Activated CD8-positive, alpha-beta memory T cell treated with anti-CD3 and anti-CD28 coated beads, Interleukin-2, amount 10 ng/mL, durations not matched to agents 7 days and 5 days (primary cell): ENCODE measurements at regions of chr1 and their contacts with region 1.

Region 1: DNA sequence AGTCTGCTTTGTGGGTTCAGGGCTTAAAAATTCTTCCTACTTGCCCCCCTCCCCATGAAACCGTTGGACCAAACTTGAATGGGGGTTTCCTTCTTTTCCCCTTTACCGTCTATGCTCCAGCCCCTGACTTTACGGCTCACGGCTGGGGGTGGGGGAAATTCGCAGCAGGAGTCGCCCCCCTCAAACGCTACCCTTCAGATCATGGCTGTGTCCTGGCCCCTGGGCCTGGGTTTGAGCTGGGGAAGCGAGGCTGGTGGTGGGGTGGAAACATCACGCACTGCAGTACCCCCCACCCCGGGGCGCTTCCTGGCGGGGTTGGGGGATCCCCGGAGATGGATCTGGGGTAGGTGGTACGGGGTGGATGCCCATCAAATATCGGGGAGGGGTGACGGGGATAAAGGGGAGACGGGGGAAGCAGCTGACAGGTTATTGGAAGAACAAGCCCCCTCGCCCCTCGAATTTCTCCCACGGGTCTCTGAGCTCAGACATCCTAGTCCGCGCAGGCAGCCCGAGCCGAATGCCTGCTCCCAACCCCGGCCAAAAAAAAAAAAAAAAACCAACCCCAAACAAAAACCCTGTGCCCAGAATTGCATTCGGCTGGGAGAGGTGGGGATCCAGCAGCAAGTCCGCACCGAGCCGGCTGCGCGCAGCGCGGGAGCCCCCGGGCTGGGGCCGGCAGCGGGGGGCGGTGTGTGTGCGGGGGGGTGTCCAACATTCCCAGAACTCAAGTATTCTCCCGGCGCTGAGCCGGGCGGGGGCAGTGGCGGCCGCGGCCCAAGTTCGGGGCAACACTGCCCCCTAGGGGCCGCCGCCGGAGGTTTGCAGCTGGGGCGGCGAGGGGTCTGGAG is 59.0 kb upstream of the ACOT11 start:
- DNase-seq: peak; percentile 73
- ATAC-seq: peak; percentile 80
- H3K4me3 Mint-ChIP-seq: peak overlapping the region; percentile 75
- H3K27ac Mint-ChIP-seq: peak overlapping the region; percentile 76
- H3K4me1 Mint-ChIP-seq: peaks cover 33% of the 10 kb centered on the region
- H3K27me3 Mint-ChIP-seq: peaks cover 45% of the 10 kb centered on the region

Region 2: GRCh38 chr1:54070171-54070837 is 418.7 kb before region 1 on chr1:
- CTCF ChIA-PET with region 1: interaction called, 22 read pairs
- DNase-seq: no peak
- ATAC-seq: peak; percentile 75
- H3K4me3 Mint-ChIP-seq: no peak overlapping the region
- H3K27ac Mint-ChIP-seq: no peak overlapping the region
- H3K4me1 Mint-ChIP-seq: no peaks in the 10 kb centered on the region
- H3K27me3 Mint-ChIP-seq: no peaks in the 10 kb centered on the region

Region 3: DNA sequence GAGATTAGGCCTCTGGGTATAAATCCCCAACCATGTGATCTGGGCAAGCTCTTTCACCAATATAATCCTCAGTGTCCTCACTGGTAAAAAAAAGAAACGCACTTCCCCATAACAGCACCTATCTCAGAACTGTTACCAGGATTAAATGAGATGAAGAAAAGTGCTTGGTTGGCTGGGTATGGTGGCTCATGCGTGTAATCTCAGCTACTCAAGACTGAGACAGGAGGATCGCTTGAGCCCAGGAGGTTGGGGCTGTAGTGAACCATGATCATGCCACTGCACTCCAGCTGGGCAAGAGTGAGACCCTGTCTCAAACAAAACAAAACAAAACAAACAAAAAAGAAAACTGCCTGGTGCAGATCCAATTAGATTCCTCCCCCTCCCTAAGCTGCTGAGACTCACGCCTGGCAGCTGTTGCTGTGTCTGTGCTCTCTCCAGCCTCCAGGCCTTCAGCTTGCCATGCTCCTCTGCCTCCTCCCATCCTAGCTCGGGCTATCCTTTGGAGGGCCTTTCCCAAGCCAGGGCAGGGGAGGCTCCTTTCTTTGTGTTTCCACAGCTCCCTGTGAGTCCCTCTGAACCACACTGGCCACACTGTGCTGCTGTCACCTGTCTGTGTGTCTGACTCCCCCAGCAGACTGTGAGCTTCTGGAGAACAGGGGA is 308.2 kb before region 1 on chr1:
- CTCF ChIA-PET with region 1: interaction called, 17 read pairs
- DNase-seq: no peak
- ATAC-seq: no peak
- H3K4me3 Mint-ChIP-seq: no peak overlapping the region
- H3K27ac Mint-ChIP-seq: no peak overlapping the region
- H3K4me1 Mint-ChIP-seq: no peaks in the 10 kb centered on the region
- H3K27me3 Mint-ChIP-seq: no peaks in the 10 kb centered on the region

Region 4: GRCh38 chr1:54284781-54285529 is 204.0 kb before region 1 on chr1:
- CTCF ChIA-PET with region 1: interaction called, 12 read pairs
- DNase-seq: peak; percentile 76
- ATAC-seq: peak; percentile 59
- H3K4me3 Mint-ChIP-seq: peak overlapping the region; percentile 74
- H3K27ac Mint-ChIP-seq: peak overlapping the region; percentile 97
- H3K4me1 Mint-ChIP-seq: peaks cover 90% of the 10 kb centered on the region
- H3K27me3 Mint-ChIP-seq: no peaks in the 10 kb centered on the region

Region 5: DNA sequence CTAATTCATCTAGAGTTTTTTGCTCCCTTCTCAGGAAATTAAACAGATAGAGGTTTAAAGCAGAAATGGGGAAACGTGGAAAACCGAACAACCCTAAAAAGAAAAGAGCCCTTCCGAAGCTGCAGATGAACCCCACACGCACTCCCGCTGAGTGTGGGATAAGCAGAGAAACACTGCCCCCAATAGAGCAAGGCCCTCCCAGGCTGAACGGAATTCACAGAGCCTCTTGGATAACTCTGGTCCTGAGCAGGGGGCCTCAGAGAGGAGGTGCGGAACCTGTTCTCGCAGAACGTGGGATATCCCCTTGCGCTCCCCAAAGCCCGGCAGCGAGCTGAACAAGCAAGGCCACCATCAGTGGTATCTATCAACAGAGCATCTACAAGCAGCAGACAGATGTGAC is 127.7 kb before region 1 on chr1:
- CTCF ChIA-PET with region 1: interaction called, 13 read pairs
- DNase-seq: no peak
- ATAC-seq: no peak
- H3K4me3 Mint-ChIP-seq: no peak overlapping the region
- H3K27ac Mint-ChIP-seq: no peak overlapping the region
- H3K4me1 Mint-ChIP-seq: peaks cover 41% of the 10 kb centered on the region
- H3K27me3 Mint-ChIP-seq: no peaks in the 10 kb centered on the region

Region 6: GRCh38 chr1:54413295-54413694 is 75.7 kb before region 1 on chr1:
- CTCF ChIA-PET with region 1: interaction called, 16 read pairs
- DNase-seq: peak; percentile 64
- ATAC-seq: peak; percentile 37
- H3K4me3 Mint-ChIP-seq: peak overlapping the region; percentile 49
- H3K27ac Mint-ChIP-seq: peak overlapping the region; percentile 42
- H3K4me1 Mint-ChIP-seq: peaks cover 38% of the 10 kb centered on the region
- H3K27me3 Mint-ChIP-seq: peaks cover 16% of the 10 kb centered on the region

Region 7: DNA sequence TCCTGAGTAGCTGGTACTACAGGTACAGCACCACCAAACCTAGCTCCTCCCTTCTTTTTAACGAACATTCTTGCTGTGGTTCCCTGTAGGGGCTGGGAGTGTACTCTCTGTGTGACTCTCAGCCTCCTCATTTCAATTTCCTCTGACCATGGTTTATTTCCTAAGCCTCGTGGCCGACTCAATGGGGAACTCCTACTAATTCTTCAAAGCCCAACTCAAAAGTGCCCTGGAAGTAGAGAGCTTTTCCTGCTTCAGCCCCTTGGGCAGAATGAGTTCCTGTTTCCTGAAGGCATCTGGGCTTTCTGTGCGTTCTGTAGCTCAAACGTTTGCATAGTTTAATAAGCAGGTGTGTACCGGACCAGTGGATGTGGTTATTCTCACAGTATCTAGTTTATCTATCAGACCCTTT is 11.8 kb before region 1 on chr1:
- CTCF ChIA-PET with region 1: interaction called, 11 read pairs
- DNase-seq: no peak
- ATAC-seq: peak; percentile 32
- H3K4me3 Mint-ChIP-seq: no peak overlapping the region
- H3K27ac Mint-ChIP-seq: peak overlapping the region; percentile 13
- H3K4me1 Mint-ChIP-seq: peaks cover 60% of the 10 kb centered on the region
- H3K27me3 Mint-ChIP-seq: peaks cover 18% of the 10 kb centered on the region

Region 8: GRCh38 chr1:54547601-54548388 is 58.8 kb after region 1 on chr1 and contains the start of gene ACOT11:
- CTCF ChIA-PET with region 1: no interaction called
- DNase-seq: no peak
- ATAC-seq: no peak
- H3K4me3 Mint-ChIP-seq: no peak within 1 kb of the TSS
- H3K27ac Mint-ChIP-seq: no peak within 1 kb of the TSS
- H3K4me1 Mint-ChIP-seq: peaks cover 5% of the 10 kb centered on the region
- H3K27me3 Mint-ChIP-seq: peaks cover 2% of the 10 kb centered on the region
- total RNA-seq, gene ACOT11: 0.58 to 0.96 TPM